T-cell (primary cell): ENCODE measurements at regions of chr12 and their contacts with region 1.

Region 1: GRCh38 chr12:104286538-104287482 is 16.7 kb upstream of the EID3 start:
- DNase-seq: peak; percentile 74 to 93 (median 87)
- ATAC-seq: peak; percentile 87 to 92 (median 90)
- H3K4me3 ChIP-seq: peak overlapping the region; percentile 83 to 86
- H3K4me3 Mint-ChIP-seq: peak overlapping the region; percentile 99 to 100 (median 100)
- H3K27ac ChIP-seq: peak overlapping the region; percentile 83
- H3K27ac Mint-ChIP-seq: peak overlapping the region; percentile 99
- H3K4me1 ChIP-seq: peaks cover 18 to 30% of the 10 kb centered on the region in 2 experiments
- H3K4me1 Mint-ChIP-seq: peaks cover 35 to 43% (median 38%) of the 10 kb centered on the region in 3 donors
- H3K27me3 ChIP-seq: no peaks in the 10 kb centered on the region
- H3K27me3 Mint-ChIP-seq: no peaks in the 10 kb centered on the region

Region 2: GRCh38 chr12:104303538-104304151 is 16.8 kb after region 1 on chr12 and contains the start of gene EID3:
- CTCF ChIA-PET with region 1: interaction called, 4 to 62 read pairs
- POLR2A ChIA-PET with region 1: interaction called, 6 to 52 read pairs
- DNase-seq: peak; percentile 78 to 95 (median 88)
- ATAC-seq: peak; percentile 93 to 98 (median 96)
- H3K4me3 ChIP-seq: peak within 1 kb of the TSS; percentile 56 to 74
- H3K4me3 Mint-ChIP-seq: peak within 1 kb of the TSS; percentile 90 to 96 (median 91)
- H3K27ac ChIP-seq: peak within 1 kb of the TSS; percentile 80
- H3K27ac Mint-ChIP-seq: peak within 1 kb of the TSS; percentile 93 to 95
- H3K4me1 ChIP-seq: peaks cover 14 to 17% of the 10 kb centered on the region in 2 experiments
- H3K4me1 Mint-ChIP-seq: peaks cover 60 to 61% (median 61%) of the 10 kb centered on the region in 3 donors
- H3K27me3 ChIP-seq: no peaks in the 10 kb centered on the region
- H3K27me3 Mint-ChIP-seq: no peaks in the 10 kb centered on the region
- total RNA-seq, gene EID3: 5.6 to 13.0 (median 6.0) TPM

Region 3: GRCh38 chr12:104319918-104320626 is 33.3 kb after region 1 on chr12:
- CTCF ChIA-PET with region 1: interaction called in 1 of 2 experiments, 4 read pairs
- POLR2A ChIA-PET with region 1: interaction called in 1 of 2 experiments, 12 read pairs
- DNase-seq: no peak
- ATAC-seq: no peak
- H3K4me3 ChIP-seq: no peak overlapping the region
- H3K4me3 Mint-ChIP-seq: no peak overlapping the region
- H3K27ac ChIP-seq: no peak overlapping the region
- H3K27ac Mint-ChIP-seq: no peak overlapping the region
- H3K4me1 ChIP-seq: no peaks in the 10 kb centered on the region
- H3K4me1 Mint-ChIP-seq: no peaks in the 10 kb centered on the region
- H3K27me3 ChIP-seq: no peaks in the 10 kb centered on the region
- H3K27me3 Mint-ChIP-seq: no peaks in the 10 kb centered on the region

Region 4: DNA sequence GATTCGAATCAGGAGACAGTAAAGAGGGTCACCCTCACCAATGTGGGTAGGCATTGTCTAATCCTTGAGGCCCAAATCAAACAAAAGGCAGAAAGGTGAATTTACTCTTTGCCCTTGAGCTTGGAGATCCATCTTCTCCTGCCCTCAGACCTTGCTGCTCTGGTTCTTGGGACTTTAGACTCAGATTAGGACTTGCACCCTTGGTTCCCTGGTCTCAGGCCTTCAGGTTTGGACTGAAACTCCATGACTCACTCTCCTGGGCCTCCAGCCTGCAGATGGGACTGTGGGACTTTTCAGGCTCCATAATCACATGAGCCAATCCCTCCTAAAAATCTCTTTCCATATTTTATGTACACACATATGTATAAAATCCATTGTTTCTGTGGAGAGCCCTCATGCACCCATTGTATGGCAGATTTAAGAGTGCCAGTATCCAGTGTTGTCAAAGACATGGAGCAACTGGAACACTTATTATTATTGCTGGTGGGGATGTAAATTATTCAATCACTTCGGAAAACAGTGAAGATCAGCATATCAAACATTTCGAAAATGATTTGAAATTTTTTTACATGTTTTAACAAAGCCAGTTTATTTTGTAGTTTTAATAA is 65.4 kb after region 1 on chr12:
- CTCF ChIA-PET with region 1: no interaction called
- POLR2A ChIA-PET with region 1: no interaction called
- DNase-seq: no peak
- ATAC-seq: no peak
- H3K4me3 ChIP-seq: no peak overlapping the region
- H3K4me3 Mint-ChIP-seq: no peak overlapping the region
- H3K27ac ChIP-seq: no peak overlapping the region
- H3K27ac Mint-ChIP-seq: no peak overlapping the region
- H3K4me1 ChIP-seq: no peaks in the 10 kb centered on the region
- H3K4me1 Mint-ChIP-seq: no peaks in the 10 kb centered on the region
- H3K27me3 ChIP-seq: no peaks in the 10 kb centered on the region
- H3K27me3 Mint-ChIP-seq: no peaks in the 10 kb centered on the region

Region 5: DNA sequence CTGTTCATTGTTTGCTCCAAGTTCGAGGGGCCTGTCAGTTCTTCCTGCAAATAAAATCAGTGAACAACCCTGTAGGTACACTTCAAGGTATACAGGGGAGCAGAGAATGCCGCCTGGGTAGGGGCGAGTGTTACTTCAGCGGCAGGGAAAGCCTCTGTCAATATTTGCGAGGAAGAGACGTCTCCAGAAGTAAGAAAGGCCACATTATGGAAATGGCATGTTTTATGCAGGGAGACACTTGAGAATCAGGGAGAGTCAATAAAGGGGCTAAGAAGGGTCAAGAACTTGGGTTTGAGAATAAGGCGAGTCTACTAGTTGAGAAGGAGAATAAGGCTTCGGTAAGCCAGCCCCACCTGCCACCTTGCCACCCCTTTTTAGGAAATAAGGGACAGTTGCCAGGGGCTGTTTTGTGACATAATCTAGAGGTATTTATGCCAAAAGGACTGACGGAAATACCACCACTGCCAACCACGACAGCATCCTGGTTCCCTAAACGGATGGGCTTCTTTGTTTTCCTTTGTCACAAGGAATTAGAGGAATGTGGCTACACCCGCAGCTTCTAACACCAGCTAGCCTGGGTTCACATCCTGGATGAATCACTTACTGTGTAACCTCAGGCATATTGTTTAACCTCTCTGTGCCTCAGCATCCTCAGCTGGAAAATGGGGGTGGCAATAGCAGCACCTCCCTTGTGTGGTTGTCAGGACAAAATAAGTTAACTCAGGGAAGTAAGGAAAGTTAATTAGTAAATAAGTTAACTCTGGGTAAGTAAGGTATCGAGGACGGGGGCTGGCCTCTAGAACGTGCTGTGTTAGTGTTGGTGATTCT is 84.4 kb after region 1 on chr12:
- CTCF ChIA-PET with region 1: no interaction called
- POLR2A ChIA-PET with region 1: no interaction called
- DNase-seq: no peak
- ATAC-seq: no peak
- H3K4me3 ChIP-seq: no peak overlapping the region
- H3K4me3 Mint-ChIP-seq: no peak overlapping the region
- H3K27ac ChIP-seq: no peak overlapping the region
- H3K27ac Mint-ChIP-seq: no peak overlapping the region
- H3K4me1 ChIP-seq: peaks cover 4 to 15% of the 10 kb centered on the region in 2 experiments
- H3K4me1 Mint-ChIP-seq: peaks cover 11 to 20% (median 14%) of the 10 kb centered on the region in 3 donors
- H3K27me3 ChIP-seq: peaks cover 0 to 3% of the 10 kb centered on the region in 2 experiments
- H3K27me3 Mint-ChIP-seq: peaks cover 0 to 3% of the 10 kb centered on the region in 2 donors